CD4-positive, alpha-beta memory T cell (primary cell): ENCODE measurements at regions of chr15 and their contacts with region 1.

Region 1: GRCh38 chr15:31472636-31473384 is 146.2 kb downstream of the KLF13 start:
- DNase-seq: peak; percentile 56 to 69 (median 62)
- H3K4me3 ChIP-seq: peak overlapping the region; percentile 12 to 41
- H3K4me3 Mint-ChIP-seq: peak overlapping the region; percentile 60 to 89 (median 79)
- H3K27ac ChIP-seq: peak overlapping the region; percentile 51
- H3K27ac Mint-ChIP-seq: peak overlapping the region; percentile 80 to 96 (median 94)
- H3K4me1 ChIP-seq: peaks cover 42% of the 10 kb centered on the region
- H3K4me1 Mint-ChIP-seq: peaks cover 31 to 57% (median 47%) of the 10 kb centered on the region in 4 donors
- H3K27me3 ChIP-seq: no peaks in the 10 kb centered on the region
- H3K27me3 Mint-ChIP-seq: no peaks in the 10 kb centered on the region

Region 2: DNA sequence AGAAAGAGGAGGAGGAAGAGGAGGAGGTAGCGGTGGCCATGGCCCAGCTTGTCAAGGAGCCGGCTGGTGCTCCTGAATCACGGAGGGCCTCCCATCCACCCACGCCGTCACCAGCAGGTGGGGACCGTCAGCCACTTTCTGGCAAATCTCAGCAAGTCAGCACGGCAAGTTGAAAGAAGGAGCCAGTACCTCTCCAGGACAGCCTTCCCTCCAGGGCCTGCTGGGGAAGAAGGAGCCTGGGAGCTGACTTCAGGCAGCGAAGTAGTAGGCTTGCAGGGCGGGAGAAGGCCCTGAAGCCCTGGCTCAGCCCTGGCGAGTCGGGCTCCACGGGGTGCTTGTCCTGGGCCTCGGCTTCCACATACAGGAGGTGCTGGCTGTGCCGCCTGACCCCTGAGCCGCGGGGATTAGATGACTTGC is 272.1 kb before region 1 on chr15:
- CTCF ChIA-PET with region 1: interaction called, 10 read pairs
- POLR2A ChIA-PET with region 1: no interaction called
- intact Hi-C with region 1: no loop called
- DNase-seq: peak; percentile 70 to 73 (median 71)
- H3K4me3 ChIP-seq: no peak overlapping the region
- H3K4me3 Mint-ChIP-seq: peak overlapping the region in 2 of 8 donors; percentile 20 to 26
- H3K27ac ChIP-seq: no peak overlapping the region
- H3K27ac Mint-ChIP-seq: peak overlapping the region in 4 of 7 donors; percentile 18 to 87 (median 38)
- H3K4me1 ChIP-seq: peaks cover 26% of the 10 kb centered on the region
- H3K4me1 Mint-ChIP-seq: peaks cover 9 to 30% (median 15%) of the 10 kb centered on the region in 4 donors
- H3K27me3 ChIP-seq: no peaks in the 10 kb centered on the region
- H3K27me3 Mint-ChIP-seq: no peaks in the 10 kb centered on the region

Region 3: DNA sequence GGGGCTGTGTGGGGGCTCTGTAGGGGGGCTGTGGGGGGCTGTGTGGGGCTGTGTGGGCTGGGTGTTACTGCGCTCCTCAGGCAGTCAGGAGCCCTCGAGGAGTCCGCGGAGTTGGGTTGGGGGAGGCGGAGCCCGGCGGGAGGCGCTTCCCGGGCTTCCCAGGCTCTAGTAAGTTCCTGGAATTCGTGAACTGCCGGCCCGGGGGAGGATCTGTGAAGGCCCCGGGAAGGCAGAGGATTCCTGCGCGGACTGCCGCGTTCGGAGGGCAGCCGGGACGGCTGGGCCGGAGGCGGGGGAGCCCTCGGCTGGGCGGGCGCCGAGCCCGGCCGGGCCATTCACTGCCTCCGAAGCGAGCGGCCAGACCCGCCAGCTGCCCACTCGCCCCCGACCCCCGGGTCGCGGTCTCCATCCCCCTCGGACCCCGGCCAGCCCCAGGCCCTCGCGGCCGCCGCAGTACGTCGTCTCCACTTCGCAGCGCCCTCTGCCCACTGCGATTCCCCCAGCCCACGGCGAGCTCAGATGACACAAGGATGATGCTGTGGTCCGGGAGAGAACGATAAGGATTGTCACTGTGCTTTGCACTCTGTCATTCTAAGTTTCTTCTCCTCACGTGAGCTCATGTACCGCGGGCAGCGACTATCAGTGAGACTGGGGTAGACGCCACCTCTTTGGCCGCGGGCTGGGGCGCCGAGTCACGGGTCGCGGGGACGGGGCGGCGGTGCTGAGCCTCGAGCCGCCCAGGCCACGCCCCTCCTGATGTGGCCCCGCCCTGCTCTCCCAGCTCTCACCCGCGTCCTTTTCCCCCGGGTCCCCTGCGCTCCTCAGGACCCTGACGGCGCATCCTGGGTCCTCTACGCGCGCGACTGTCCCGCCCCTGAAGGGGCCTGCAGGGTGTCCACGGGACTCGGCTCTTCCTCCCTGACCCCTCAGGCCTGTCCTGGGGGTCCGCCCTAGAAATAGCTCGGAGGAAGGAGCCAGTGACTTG is 80.8 kb before region 1 on chr15:
- CTCF ChIA-PET with region 1: interaction called, 4 read pairs
- POLR2A ChIA-PET with region 1: interaction called, 13 read pairs
- intact Hi-C with region 1: no loop called
- DNase-seq: peak; percentile 78 to 87 (median 79)
- H3K4me3 ChIP-seq: peak overlapping the region; percentile 65 to 77
- H3K4me3 Mint-ChIP-seq: peak overlapping the region; percentile 87 to 96 (median 92)
- H3K27ac ChIP-seq: peak overlapping the region; percentile 57
- H3K27ac Mint-ChIP-seq: peak overlapping the region; percentile 81 to 98 (median 93)
- H3K4me1 ChIP-seq: peaks cover 28% of the 10 kb centered on the region
- H3K4me1 Mint-ChIP-seq: peaks cover 28 to 60% (median 39%) of the 10 kb centered on the region in 4 donors
- H3K27me3 ChIP-seq: no peaks in the 10 kb centered on the region
- H3K27me3 Mint-ChIP-seq: no peaks in the 10 kb centered on the region

Region 4: DNA sequence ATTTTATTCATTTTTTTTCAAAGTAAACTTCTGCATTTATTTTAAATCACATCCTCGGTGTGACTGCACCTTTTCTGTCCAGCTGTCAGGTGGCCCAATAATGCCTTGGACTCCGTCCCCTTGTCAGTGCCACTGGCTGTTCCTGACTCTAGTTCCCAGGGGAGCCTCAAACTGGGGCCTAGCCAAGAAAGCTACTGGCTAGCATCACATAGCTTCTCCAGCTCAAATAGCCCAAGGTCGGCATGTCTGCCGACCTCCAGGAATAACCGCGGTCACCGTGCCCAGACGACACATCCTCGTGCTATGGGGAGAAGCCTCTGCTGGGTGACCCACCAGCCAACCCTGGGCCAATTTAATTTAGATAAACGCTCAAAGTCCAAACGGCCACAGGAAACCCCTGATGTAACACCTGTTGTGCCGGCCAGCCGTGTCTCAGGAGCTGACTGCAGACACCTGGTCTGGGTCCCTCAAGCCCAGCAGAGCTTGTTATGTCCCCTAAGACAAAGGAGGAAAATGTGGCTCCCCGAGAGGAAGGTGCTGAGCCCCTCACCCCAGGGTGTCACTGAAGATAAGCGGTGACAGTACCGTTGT is 20.1 kb before region 1 on chr15:
- CTCF ChIA-PET with region 1: interaction called, 10 read pairs
- POLR2A ChIA-PET with region 1: interaction called, 5 read pairs
- intact Hi-C with region 1: no loop called
- DNase-seq: no peak
- H3K4me3 ChIP-seq: no peak overlapping the region
- H3K4me3 Mint-ChIP-seq: no peak overlapping the region
- H3K27ac ChIP-seq: no peak overlapping the region
- H3K27ac Mint-ChIP-seq: no peak overlapping the region
- H3K4me1 ChIP-seq: peaks cover 15% of the 10 kb centered on the region
- H3K4me1 Mint-ChIP-seq: peaks cover 10 to 18% (median 13%) of the 10 kb centered on the region in 4 donors
- H3K27me3 ChIP-seq: no peaks in the 10 kb centered on the region
- H3K27me3 Mint-ChIP-seq: no peaks in the 10 kb centered on the region

Region 5: DNA sequence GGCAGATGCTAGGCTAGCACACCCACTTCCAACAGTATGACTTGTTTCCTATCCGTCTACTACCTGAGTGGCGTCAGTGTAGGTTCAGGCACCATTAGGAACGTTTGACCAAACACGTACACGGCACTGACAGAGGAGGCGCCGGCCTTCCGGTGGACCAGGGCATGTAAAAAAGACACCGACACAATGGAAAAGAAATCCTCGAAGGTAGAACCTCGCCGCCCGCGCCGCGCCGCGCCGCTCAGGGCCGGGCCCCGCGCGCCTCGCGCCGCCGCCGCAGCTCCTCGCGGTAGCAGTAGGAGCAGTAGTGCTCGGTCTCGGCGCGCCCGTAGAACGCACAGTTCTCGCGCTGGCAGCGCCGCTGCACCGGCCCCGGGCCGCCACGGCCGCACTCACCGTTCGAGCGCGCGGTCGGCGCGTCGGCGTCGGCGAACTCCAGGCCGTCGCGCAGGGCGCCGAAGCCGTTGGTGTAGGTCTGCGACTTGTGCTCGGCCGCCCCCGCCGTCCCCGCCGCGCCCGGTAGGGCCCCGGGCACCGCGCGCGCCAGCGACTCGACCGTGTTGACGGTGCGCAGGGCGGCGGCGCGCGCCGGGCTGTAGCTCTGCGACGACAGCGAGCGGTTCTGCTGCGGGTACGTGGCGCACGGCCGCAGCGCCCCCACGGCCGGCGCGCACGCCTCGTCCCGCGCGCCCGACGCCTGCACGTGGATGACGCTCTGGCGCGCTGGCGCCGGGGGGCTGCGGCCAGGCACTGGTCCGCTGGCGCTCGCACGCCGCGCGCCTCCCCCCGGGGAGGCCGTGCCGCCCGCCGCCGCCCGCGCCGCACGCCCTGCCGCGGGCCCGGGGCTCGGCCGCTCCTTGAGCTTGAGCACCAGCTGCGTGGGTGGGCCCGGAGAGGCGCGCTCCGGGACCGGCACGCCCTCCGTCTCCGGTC is 10.5 kb after region 1 on chr15:
- CTCF ChIA-PET with region 1: interaction called, 115 read pairs
- POLR2A ChIA-PET with region 1: interaction called, 87 read pairs
- intact Hi-C with region 1: no loop called
- DNase-seq: peak; percentile 48 to 64 (median 56)
- H3K4me3 ChIP-seq: peak overlapping the region in 1 of 2 donors; percentile 29
- H3K4me3 Mint-ChIP-seq: peak overlapping the region; percentile 91 to 96 (median 96)
- H3K27ac ChIP-seq: no peak overlapping the region
- H3K27ac Mint-ChIP-seq: peak overlapping the region; percentile 75 to 97 (median 92)
- H3K4me1 ChIP-seq: peaks cover 46% of the 10 kb centered on the region
- H3K4me1 Mint-ChIP-seq: peaks cover 21 to 69% (median 39%) of the 10 kb centered on the region in 4 donors
- H3K27me3 ChIP-seq: no peaks in the 10 kb centered on the region
- H3K27me3 Mint-ChIP-seq: no peaks in the 10 kb centered on the region

Region 6: DNA sequence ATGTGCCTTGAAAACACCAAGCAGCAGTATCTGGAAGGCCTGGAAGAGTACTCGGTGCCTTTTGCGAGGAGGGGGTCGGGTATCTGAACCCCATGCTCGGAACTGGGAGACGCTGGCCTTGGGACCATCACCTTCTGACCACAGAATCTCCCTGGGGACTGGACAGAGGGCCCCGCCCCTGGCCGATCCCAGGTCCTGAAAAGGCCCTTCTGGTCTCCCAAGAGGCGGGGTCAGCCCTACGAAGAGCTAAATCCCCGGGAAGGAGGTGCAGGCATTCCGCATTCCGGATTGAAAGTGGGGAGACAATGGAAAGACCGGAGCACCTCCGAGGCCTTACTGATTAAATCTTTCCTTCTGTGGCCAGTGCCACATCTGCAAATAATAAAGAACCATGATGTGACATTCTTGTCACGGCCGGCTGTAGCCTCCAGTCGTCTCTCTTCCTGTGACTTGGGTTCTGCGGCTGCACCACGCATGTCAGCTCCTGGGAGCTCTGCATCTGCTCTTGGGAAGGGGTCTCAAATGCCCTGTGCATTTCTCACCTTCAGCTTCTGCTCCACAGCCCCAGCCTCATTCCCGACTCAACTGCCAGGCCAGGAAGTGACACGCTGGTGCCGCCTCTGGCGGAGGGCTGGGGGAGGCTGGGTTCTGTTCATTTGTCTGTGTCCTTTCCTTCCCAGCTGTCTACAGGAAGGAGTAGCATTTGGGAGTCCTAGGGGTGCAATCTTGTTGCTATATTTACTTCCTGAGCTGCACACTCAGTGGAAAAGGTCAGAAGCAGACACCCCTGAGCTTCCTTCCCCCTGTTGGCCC is 27.3 kb after region 1 on chr15:
- CTCF ChIA-PET with region 1: no interaction called
- POLR2A ChIA-PET with region 1: no interaction called
- intact Hi-C with region 1: no loop called
- DNase-seq: no peak
- H3K4me3 ChIP-seq: no peak overlapping the region
- H3K4me3 Mint-ChIP-seq: no peak overlapping the region
- H3K27ac ChIP-seq: no peak overlapping the region
- H3K27ac Mint-ChIP-seq: no peak overlapping the region
- H3K4me1 ChIP-seq: no peaks in the 10 kb centered on the region
- H3K4me1 Mint-ChIP-seq: peaks cover 0 to 2% (median under 1%) of the 10 kb centered on the region in 4 donors
- H3K27me3 ChIP-seq: no peaks in the 10 kb centered on the region
- H3K27me3 Mint-ChIP-seq: no peaks in the 10 kb centered on the region